ENCODE measurements at regions of chrX and their contacts with region 1.

Region 1: DNA sequence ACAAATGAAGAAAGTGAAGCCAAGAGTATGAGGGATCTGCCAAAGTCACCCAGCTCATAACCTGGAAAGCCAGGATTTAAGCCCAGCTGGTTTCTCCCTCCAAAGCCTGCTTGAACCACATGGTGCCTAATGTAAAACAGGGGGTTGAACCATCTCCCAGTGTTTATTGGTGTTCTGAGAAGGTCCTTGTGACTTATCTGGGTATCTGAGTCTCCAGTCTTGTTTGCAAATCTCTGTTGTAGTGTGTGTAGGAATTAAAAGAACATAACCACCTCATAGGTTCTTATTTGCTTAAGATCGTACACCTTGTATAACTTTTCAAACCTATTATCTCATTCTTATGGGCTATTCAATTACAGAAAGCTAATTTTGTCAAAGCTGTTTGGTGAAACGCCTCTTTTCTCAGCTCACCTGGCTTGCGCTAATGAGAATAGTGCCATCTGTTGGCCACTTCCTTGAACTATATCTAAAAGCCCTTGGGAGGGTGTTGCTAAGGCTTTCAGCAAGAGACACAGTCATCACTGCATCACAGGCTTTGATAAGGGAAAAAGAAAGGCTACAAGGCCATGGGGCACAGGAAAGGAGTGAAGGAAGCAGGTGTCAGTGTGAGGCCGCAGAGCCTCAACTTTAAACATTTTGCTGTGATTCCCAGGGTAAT is 34.0 kb downstream of the ETDB start:
- DNase-seq: peak; percentile 15
- ATAC-seq: peak; percentile 96
- H3K4me3 ChIP-seq: no peak overlapping the region
- H3K27ac ChIP-seq: no peak overlapping the region
- H3K4me1 ChIP-seq: no peaks in the 10 kb centered on the region
- H3K27me3 ChIP-seq: no peaks in the 10 kb centered on the region
- CTCF ChIP-seq: peak; percentile 63 to 73 (median 69); a peak in 5 of 6 replicates
- EP300 ChIP-seq: no peak
- POLR2A ChIP-seq: no peak
- RAD21 ChIP-seq: peak; percentile 60

Region 2: DNA sequence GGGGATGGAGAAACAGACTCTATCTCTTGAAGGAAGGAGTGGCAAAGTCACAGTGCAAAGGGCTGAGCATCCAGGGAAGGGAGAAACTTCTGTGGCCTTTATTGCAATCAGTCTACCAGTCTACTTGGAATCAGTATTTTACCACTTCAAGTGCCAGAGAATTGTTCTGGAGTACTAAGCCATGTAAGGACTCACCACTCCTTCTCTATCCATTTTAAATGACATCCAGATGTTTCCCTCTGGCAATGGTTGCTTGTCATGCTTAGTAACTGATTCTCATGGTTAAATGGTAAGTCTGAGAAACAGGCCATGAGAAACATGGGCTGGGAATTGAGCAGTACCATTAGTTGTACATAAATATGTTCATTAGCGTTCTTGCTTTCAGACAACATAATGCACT is 116.6 kb before region 1 on chrX:
- CTCF ChIA-PET with region 1: interaction called, 6 read pairs
- POLR2A ChIA-PET with region 1: no interaction called
- RAD21 ChIA-PET with region 1: no interaction called
- SMC1A ChIA-PET with region 1: no interaction called
- in situ Hi-C with region 1: no loop called
- intact Hi-C with region 1: loop called (anchors 2 kb)
- DNase-seq: no peak
- ATAC-seq: no peak
- H3K4me3 ChIP-seq: no peak overlapping the region
- H3K27ac ChIP-seq: no peak overlapping the region
- H3K4me1 ChIP-seq: no peaks in the 10 kb centered on the region
- H3K27me3 ChIP-seq: no peaks in the 10 kb centered on the region
- CTCF ChIP-seq: no peak
- EP300 ChIP-seq: no peak
- POLR2A ChIP-seq: no peak
- RAD21 ChIP-seq: no peak

Region 3: DNA sequence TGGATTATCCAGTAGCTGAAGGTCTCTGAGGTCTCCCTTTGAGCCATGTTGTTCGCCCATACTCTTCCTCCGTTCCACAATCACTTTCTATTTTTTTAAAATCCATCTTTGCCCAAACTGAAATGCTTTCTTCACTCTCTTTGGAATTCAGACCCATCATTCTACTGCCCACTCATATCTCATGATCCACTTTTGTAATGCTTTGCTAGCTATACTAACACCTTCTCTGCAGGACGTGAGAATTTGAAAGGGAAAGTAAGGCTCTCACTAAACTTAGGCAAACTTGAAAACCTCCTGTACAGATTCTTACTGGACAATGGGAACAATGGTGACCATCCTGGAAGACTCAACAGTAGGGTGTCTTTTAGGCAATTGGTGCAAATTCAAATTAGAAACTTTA is 25.6 kb before region 1 on chrX:
- CTCF ChIA-PET with region 1: no interaction called
- POLR2A ChIA-PET with region 1: no interaction called
- RAD21 ChIA-PET with region 1: no interaction called
- SMC1A ChIA-PET with region 1: no interaction called
- in situ Hi-C with region 1: no loop called
- intact Hi-C with region 1: no loop called
- DNase-seq: no peak
- ATAC-seq: no peak
- H3K4me3 ChIP-seq: no peak overlapping the region
- H3K27ac ChIP-seq: no peak overlapping the region
- H3K4me1 ChIP-seq: no peaks in the 10 kb centered on the region
- H3K27me3 ChIP-seq: no peaks in the 10 kb centered on the region
- CTCF ChIP-seq: no peak
- EP300 ChIP-seq: no peak
- POLR2A ChIP-seq: no peak
- RAD21 ChIP-seq: no peak

Region 4: DNA sequence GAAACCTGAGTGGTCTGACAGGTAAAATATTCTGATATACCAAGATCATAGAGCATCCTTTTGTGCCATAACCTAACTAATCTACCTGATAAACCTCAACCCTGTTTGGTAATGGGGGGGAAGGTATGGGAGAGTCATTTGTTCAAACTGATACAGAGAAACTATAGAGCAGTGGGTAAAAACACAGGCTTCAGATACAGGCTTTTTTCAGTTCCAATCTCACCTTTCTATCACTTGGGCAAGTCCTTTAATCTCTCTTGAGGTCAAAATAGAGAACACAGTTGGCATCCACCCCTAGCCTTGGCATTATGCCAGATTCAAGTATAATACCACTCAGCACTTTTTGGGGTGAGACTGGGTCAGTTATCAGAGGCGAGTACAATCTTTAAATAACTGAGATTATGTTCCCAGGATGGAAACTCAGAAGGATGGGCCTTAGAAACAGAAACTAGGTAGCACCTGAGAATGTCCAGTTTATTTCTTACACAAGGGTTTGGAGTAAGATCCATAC is 222.1 kb after region 1 on chrX:
- CTCF ChIA-PET with region 1: no interaction called
- POLR2A ChIA-PET with region 1: no interaction called
- RAD21 ChIA-PET with region 1: no interaction called
- SMC1A ChIA-PET with region 1: no interaction called
- in situ Hi-C with region 1: no loop called
- intact Hi-C with region 1: no loop called
- DNase-seq: no peak
- ATAC-seq: no peak
- H3K4me3 ChIP-seq: no peak overlapping the region
- H3K27ac ChIP-seq: no peak overlapping the region
- H3K4me1 ChIP-seq: no peaks in the 10 kb centered on the region
- H3K27me3 ChIP-seq: no peaks in the 10 kb centered on the region
- CTCF ChIP-seq: no peak
- EP300 ChIP-seq: no peak
- POLR2A ChIP-seq: no peak
- RAD21 ChIP-seq: no peak

Measured in GM12878 (cell line).